ENCODE measurements at regions of chr4 and their contacts with region 1.

Region 1: DNA sequence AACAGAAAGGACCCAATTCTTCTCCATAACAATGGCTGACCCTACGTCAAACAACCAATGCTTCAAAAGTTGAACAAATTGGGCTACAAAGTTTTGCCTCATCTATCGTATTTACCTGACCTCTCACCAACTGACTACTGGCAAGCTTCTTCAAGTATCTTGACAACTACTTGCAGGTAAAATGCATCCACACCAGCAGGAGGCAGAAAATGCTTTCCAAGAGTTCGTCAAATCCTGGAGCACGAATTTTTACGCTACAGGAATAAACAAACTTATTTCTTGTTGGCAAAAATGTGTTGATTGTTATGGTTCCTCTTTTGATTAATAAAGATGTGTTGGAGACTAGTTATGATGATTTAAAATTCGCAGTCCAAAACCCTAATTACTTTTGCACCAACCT is 6.7 kb upstream of the GAB1 start:
- DNase-seq: no peak
- H3K4me3 ChIP-seq: no peak overlapping the region
- H3K27ac ChIP-seq: no peak overlapping the region
- H3K4me1 ChIP-seq: peaks cover 0 to 6% (median 0%) of the 10 kb centered on the region in 6 donors
- H3K27me3 ChIP-seq: peaks cover 0 to 5% (median 0%) of the 10 kb centered on the region in 7 donors
- CTCF ChIP-seq: no peak
- POLR2A ChIP-seq: no peak

Region 2: GRCh38 chr4:143215873-143216272 is 114.1 kb before region 1 on chr4:
- intact Hi-C with region 1: loop called (anchors 10 kb)
- DNase-seq: no peak
- H3K4me3 ChIP-seq: no peak overlapping the region
- H3K27ac ChIP-seq: no peak overlapping the region
- H3K4me1 ChIP-seq: peaks cover 0 to 5% (median 0%) of the 10 kb centered on the region in 6 donors
- H3K27me3 ChIP-seq: no peaks in the 10 kb centered on the region
- CTCF ChIP-seq: no peak
- POLR2A ChIP-seq: no peak

Measured in spleen (tissue), 13 donors.